Activated T-helper 2 cell treated with anti-CD3 and anti-CD28 coated beads, Interferon-gamma antibody, Interleukin-2, Interleukin-4, amounts not matched to agents 10 μg/mL and 5 μg/mL and 100 μg/mL, durations not matched to agents 14 hours and 24 hours and 36 hours (primary cell): ENCODE measurements at regions of chr14 and their contacts with region 1.

Region 1: GRCh38 chr14:97458661-97459579 is 661.7 kb downstream of the VRK1 start:
- DNase-seq: peak; percentile 81
- H3K4me3 Mint-ChIP-seq: peak overlapping the region; percentile 84
- H3K27ac Mint-ChIP-seq: peak overlapping the region; percentile 97
- H3K4me1 Mint-ChIP-seq: peaks cover 59% of the 10 kb centered on the region
- H3K27me3 Mint-ChIP-seq: no peaks in the 10 kb centered on the region

Region 2: GRCh38 chr14:97408937-97409815 is 49.7 kb before region 1 on chr14:
- intact Hi-C with region 1: loop called (anchors 1 kb)
- DNase-seq: peak; percentile 56
- H3K4me3 Mint-ChIP-seq: peak overlapping the region; percentile 64
- H3K27ac Mint-ChIP-seq: peak overlapping the region; percentile 92
- H3K4me1 Mint-ChIP-seq: peaks cover 32% of the 10 kb centered on the region
- H3K27me3 Mint-ChIP-seq: no peaks in the 10 kb centered on the region

Region 3: DNA sequence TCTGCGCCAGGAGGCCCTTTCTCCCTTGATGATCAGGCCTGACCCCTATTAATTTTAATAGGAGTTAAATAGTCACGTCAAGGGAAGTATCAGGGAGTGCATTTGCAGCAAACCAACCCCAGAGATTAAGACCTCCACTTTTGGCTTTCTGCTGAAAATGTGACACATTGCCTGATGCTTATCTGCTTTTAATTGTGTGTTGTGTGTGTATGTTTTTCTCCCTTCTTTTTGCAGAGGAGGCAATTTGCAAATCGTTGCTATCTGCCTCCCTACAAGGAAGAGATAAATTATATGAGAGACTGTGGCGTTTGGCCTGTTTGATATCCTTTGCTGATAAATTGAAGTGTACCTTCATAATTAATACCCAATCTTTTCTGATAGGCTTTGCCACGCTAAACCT is 161.1 kb after region 1 on chr14:
- intact Hi-C with region 1: loop called (anchors 5 kb)
- DNase-seq: no peak
- H3K4me3 Mint-ChIP-seq: peak overlapping the region; percentile 59
- H3K27ac Mint-ChIP-seq: peak overlapping the region; percentile 84
- H3K4me1 Mint-ChIP-seq: peaks cover 47% of the 10 kb centered on the region
- H3K27me3 Mint-ChIP-seq: no peaks in the 10 kb centered on the region

Region 4: GRCh38 chr14:97724265-97724731 is 265.4 kb after region 1 on chr14:
- intact Hi-C with region 1: loop called (anchors 5 kb)
- DNase-seq: peak; percentile 31
- H3K4me3 Mint-ChIP-seq: peak overlapping the region; percentile 72
- H3K27ac Mint-ChIP-seq: peak overlapping the region; percentile 95
- H3K4me1 Mint-ChIP-seq: peaks cover 58% of the 10 kb centered on the region
- H3K27me3 Mint-ChIP-seq: no peaks in the 10 kb centered on the region

Region 5: DNA sequence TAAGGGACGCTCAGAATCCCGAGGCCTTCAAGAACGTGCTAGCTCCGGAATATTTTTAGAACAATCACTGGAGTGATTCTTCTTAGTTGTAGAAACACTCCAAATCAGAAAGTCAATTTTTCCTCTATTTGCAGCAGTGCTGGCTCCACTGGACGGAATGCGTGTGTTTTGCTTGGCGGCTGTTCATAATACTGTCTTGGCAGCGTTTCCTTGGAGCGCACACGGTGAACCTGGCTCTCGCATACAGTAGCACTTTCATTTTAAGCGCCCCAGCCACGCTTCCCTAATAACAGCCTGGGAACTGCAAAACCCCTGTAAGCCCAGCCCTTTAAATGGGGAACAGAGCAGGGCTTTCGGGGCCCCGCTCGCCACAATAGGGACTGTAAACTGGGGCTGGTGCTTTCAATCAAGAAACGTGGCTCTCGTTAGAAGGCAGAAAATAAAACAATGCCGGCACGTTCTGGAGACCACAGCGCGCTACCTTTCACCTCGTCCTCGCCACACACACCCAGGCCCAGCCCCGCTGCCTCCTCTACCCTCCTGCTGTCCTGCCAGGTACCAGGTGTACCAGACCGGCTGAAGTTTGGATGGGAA is 1733.2 kb after region 1 on chr14:
- intact Hi-C with region 1: loop called (anchors 10 kb)
- DNase-seq: peak; percentile 33
- H3K4me3 Mint-ChIP-seq: peak overlapping the region; percentile 91
- H3K27ac Mint-ChIP-seq: peak overlapping the region; percentile 96
- H3K4me1 Mint-ChIP-seq: peaks cover 76% of the 10 kb centered on the region
- H3K27me3 Mint-ChIP-seq: no peaks in the 10 kb centered on the region